Calu3 (cell line): ENCODE measurements at regions of chr3 and their contacts with region 1.

Region 1: DNA sequence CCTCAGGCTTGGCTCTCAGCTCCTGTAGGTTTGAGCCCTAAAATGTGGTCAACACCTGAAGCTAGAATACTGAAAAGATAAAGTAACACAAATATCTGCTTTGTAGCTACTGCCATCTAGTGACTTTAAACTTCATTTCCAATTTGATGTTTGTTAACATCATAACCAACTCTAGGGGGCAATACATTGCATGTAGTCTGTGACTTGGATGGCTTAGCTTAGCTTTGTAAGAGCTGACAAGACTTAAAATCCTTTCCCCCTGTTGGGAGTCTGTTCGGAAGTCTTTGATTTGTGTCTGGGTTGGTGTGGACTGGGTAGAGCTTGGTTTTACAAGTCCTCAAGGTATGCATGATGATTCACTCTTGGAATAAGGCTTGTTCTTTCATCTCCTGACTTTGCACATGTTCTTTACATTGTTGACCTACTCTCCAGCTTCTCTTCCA is 51.7 kb downstream of the SCN11A start:
- DNase-seq: no peak
- H3K4me3 Mint-ChIP-seq: no peak overlapping the region
- H3K27ac Mint-ChIP-seq: no peak overlapping the region
- H3K4me1 Mint-ChIP-seq: peaks cover 7% of the 10 kb centered on the region
- H3K27me3 Mint-ChIP-seq: peaks cover 29% of the 10 kb centered on the region
- CTCF ChIP-seq: peak; percentile 48

Region 2: GRCh38 chr3:38521391-38521987 is 478.5 kb before region 1 on chr3:
- CTCF ChIA-PET with region 1: interaction called, 10 read pairs
- intact Hi-C with region 1: loop called (anchors 10 kb)
- DNase-seq: peak; percentile 64
- H3K4me3 Mint-ChIP-seq: no peak overlapping the region
- H3K27ac Mint-ChIP-seq: no peak overlapping the region
- H3K4me1 Mint-ChIP-seq: no peaks in the 10 kb centered on the region
- H3K27me3 Mint-ChIP-seq: no peaks in the 10 kb centered on the region
- CTCF ChIP-seq: peak; percentile 49

Region 3: GRCh38 chr3:38662544-38662943 is 337.5 kb before region 1 on chr3:
- CTCF ChIA-PET with region 1: interaction called, 5 read pairs
- intact Hi-C with region 1: loop called (anchors 10 kb)
- DNase-seq: peak; percentile 30
- H3K4me3 Mint-ChIP-seq: no peak overlapping the region
- H3K27ac Mint-ChIP-seq: no peak overlapping the region
- H3K4me1 Mint-ChIP-seq: no peaks in the 10 kb centered on the region
- H3K27me3 Mint-ChIP-seq: peaks cover 59% of the 10 kb centered on the region
- CTCF ChIP-seq: no peak

Region 4: DNA sequence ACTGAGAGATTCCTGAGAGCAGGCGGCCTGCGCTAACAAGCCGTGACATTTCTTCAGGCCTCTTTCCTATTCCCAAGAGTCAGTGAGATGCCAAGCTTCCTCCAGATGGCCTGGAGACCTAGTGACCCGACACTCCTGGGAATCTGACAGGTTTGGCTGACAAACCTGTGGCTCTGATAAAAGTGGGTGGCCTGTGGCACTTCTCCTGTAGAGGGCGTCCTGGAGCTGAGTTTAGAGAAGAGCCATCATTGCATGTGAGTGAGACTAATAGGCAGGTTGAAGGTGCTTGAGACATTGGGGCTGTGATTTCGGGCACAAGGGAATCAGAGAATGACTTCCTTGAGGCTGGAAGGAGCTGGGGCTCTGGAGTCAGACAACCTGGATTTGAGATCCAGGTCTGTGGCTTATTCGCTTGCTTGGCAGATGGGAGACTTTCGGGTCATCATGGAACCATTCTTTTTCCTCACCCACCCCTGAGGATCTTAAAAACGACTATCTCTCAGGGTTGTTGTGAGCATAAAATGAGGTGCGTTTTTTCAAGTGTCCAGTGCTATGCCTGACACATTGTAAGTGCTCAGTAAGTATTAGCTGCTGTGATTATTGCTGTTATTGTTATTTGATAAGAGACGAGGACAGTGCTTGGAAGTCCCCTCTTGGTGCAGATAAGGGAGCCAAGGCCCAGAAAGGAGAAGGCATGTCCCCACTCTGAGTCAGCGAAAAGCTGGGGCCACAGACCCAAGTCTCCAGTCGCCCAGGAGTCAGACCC is 261.2 kb before region 1 on chr3:
- CTCF ChIA-PET with region 1: interaction called, 8 read pairs
- intact Hi-C with region 1: loop called (anchors 1 kb)
- DNase-seq: peak; percentile 72
- H3K4me3 Mint-ChIP-seq: no peak overlapping the region
- H3K27ac Mint-ChIP-seq: no peak overlapping the region
- H3K4me1 Mint-ChIP-seq: no peaks in the 10 kb centered on the region
- H3K27me3 Mint-ChIP-seq: peaks cover 71% of the 10 kb centered on the region
- CTCF ChIP-seq: peak; percentile 51

Region 5: DNA sequence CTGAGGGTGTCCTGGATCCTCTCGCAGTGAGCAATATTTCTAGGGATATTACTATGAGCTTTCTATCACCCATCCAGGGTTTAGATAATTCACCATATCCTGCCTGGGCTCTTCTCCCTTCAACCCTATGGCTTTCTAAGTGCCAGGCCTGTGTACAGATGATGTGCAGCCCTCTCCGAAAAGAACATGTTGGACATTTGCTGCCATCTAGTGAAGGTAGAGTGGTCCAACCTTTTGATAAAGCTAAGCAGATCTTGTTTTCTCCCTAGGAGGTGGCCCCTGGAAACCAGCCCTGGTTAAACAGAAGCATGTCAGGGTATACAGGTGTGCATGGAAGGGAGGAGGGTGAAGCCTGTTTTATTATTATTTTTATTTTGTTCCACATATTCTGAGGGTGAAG is 156.1 kb before region 1 on chr3:
- CTCF ChIA-PET with region 1: interaction called, 9 read pairs
- intact Hi-C with region 1: loop called (anchors 2 kb)
- DNase-seq: peak; percentile 37
- H3K4me3 Mint-ChIP-seq: no peak overlapping the region
- H3K27ac Mint-ChIP-seq: no peak overlapping the region
- H3K4me1 Mint-ChIP-seq: no peaks in the 10 kb centered on the region
- H3K27me3 Mint-ChIP-seq: peaks cover 43% of the 10 kb centered on the region
- CTCF ChIP-seq: peak; percentile 23

Region 6: DNA sequence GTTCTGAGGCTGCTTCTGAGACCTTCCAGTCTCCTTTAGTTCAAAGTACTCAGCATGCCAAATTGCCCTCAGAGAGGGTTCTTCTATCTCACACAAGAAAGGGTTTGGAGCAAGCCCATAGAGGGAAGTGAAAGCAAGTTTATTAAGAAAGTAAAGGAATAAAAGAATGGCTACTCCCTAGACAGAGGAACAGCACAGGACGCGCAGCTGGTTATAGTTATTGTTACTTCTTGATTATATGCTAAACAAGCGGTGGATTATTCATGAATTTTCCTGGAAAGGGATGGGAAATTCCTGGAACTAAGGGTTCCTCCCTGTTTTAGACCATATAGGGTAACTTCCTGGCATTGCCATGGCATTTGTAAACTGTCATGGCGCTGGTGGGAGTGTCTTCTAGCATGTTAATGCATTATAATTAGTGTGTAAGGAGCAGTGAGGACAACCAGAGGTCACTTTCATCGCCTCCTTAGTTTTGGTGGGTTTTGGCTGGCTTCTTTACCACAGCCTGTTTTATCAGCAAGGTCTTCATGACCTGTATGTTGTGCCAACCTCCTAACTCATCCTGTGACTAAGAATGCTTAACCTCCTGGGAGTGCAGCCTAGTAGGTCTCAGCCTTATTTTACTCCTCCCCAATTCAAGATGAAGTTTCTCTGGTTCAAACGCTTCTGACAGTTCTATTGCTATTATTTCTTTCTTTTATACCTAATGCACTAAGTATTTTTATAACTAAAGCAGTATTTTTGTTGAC is 25.4 kb after region 1 on chr3:
- CTCF ChIA-PET with region 1: interaction called, 12 read pairs
- intact Hi-C with region 1: no loop called
- DNase-seq: no peak
- H3K4me3 Mint-ChIP-seq: no peak overlapping the region
- H3K27ac Mint-ChIP-seq: no peak overlapping the region
- H3K4me1 Mint-ChIP-seq: no peaks in the 10 kb centered on the region
- H3K27me3 Mint-ChIP-seq: peaks cover 31% of the 10 kb centered on the region
- CTCF ChIP-seq: no peak